ENCODE measurements at regions of chr17 and their contacts with region 1.

Region 1: GRCh38 chr17:30824356-30825145 is at the start of gene CRLF3:
- DNase-seq: peak; percentile 97
- CTCF ChIP-seq: peak; percentile 36

Region 2: GRCh38 chr17:30716461-30717300 is 107.9 kb before region 1 on chr17:
- CTCF ChIA-PET with region 1: no interaction called
- POLR2A ChIA-PET with region 1: no interaction called
- DNase-seq: peak; percentile 11
- CTCF ChIP-seq: peak; percentile 40

Region 3: GRCh38 chr17:30808785-30809286 is 15.7 kb before region 1 on chr17:
- CTCF ChIA-PET with region 1: interaction called, 38 read pairs
- POLR2A ChIA-PET with region 1: interaction called, 3 read pairs
- DNase-seq: peak; percentile 70
- CTCF ChIP-seq: no peak

Region 4: DNA sequence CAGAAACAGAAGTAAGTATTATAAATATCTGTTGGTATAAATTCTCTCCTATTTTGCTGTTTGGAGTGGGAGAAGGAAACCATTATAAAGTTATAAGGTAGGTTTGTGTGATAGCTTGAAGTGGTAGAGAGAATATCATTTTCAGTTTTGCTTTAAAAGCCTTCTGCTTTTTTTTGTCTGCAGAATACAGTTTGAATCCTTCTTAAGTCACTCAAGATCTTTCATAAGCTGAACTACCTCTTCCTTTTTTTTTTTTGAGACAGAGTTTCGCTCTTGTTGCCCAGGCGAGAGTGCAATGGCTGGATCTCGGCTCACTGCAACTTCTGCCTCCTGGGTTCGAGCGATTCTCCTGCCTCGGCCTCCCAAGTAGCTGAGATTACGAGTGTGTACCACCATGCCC is 16.2 kb after region 1 on chr17:
- CTCF ChIA-PET with region 1: interaction called, 55 read pairs
- POLR2A ChIA-PET with region 1: no interaction called
- DNase-seq: no peak
- CTCF ChIP-seq: no peak

Region 5: DNA sequence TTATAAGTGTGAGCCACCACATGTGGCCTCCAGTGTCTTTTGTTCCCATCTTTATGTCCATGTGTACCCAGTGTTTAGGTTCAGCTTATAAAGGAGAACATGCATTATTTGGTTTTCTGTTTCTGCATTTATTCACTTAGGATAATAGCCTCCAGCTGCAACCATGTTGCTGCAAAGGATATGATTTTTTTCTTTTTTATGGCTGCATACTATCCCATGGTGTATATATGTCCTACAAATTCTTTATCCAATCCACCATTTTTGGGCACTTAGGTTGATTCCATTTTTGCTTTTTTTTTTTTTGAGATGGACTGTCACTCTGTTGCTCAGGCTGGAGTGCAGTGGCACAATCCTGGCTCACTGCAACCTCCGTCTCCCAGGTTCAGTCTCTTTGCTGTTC is 40.1 kb after region 1 on chr17:
- CTCF ChIA-PET with region 1: no interaction called
- POLR2A ChIA-PET with region 1: no interaction called
- DNase-seq: no peak
- CTCF ChIP-seq: no peak